Mammary epithelial cell (primary cell): ENCODE measurements at regions of chr14 and their contacts with region 1.

Region 1: DNA sequence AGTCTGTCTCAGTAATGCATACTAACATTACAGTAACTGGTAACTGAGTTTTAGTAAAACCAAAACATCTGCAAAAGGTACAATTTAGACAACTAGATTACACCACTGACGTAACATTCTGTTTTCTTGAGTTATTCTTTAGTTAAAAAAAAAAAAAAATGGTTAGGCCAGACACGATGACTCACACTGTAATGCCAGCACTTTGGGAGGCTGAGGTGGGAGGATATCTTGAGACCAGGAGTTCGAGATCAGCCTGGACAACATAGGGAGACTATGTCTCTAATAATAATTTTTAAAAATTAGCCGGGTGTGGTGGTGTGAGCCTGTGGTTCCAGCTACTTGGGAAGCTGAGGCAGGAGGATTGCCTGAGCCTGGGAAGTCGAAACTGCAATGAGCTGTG is 34.1 kb downstream of the AP5M1 start:
- DNase-seq: no peak
- H3K4me3 ChIP-seq: no peak overlapping the region
- H3K27ac ChIP-seq: no peak overlapping the region
- H3K4me1 ChIP-seq: no peaks in the 10 kb centered on the region
- H3K27me3 ChIP-seq: peaks cover 1% of the 10 kb centered on the region
- CTCF ChIP-seq: no peak

Region 2: GRCh38 chr14:55354500-55354899 is 1948.4 kb before region 1 on chr14:
- CTCF ChIA-PET with region 1: interaction called, 10 read pairs
- dilution Hi-C with region 1: no loop called
- in situ Hi-C with region 1: no loop called
- intact Hi-C with region 1: no loop called
- DNase-seq: peak; percentile 45
- H3K4me3 ChIP-seq: no peak overlapping the region
- H3K27ac ChIP-seq: no peak overlapping the region
- H3K4me1 ChIP-seq: peaks cover 8% of the 10 kb centered on the region
- H3K27me3 ChIP-seq: no peaks in the 10 kb centered on the region
- CTCF ChIP-seq: peak; percentile 55 to 76

Region 3: DNA sequence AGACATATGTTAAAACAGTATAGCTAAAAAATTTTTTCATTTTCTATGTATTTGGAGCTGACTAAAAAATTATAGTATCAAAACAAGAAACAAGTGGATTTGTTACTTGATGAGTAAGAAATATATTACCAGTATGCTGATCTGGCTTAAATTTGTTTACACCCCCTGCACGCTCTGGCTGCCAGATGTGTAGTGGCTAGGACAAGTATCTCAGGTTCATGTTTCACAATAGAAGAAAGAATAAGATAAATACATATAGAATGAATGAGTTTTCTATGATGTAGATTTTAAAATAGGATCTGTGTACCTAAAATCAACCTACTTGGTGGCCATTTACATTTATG is 100.6 kb after region 1 on chr14:
- CTCF ChIA-PET with region 1: no interaction called
- dilution Hi-C with region 1: no loop called
- in situ Hi-C with region 1: no loop called
- intact Hi-C with region 1: no loop called
- DNase-seq: no peak
- H3K4me3 ChIP-seq: no peak overlapping the region
- H3K27ac ChIP-seq: no peak overlapping the region
- H3K4me1 ChIP-seq: no peaks in the 10 kb centered on the region
- H3K27me3 ChIP-seq: no peaks in the 10 kb centered on the region
- CTCF ChIP-seq: no peak